Panc1 (cell line): ENCODE measurements at regions of chr3 and their contacts with region 1.

Region 1: GRCh38 chr3:30704931-30705890 is 98.8 kb downstream of the TGFBR2 start:
- DNase-seq: no peak
- ATAC-seq: no peak
- H3K4me3 ChIP-seq: no peak overlapping the region
- H3K27ac ChIP-seq: no peak overlapping the region
- H3K4me1 ChIP-seq: no peaks in the 10 kb centered on the region
- H3K27me3 ChIP-seq: no peaks in the 10 kb centered on the region
- CTCF ChIP-seq: no peak

Region 2: DNA sequence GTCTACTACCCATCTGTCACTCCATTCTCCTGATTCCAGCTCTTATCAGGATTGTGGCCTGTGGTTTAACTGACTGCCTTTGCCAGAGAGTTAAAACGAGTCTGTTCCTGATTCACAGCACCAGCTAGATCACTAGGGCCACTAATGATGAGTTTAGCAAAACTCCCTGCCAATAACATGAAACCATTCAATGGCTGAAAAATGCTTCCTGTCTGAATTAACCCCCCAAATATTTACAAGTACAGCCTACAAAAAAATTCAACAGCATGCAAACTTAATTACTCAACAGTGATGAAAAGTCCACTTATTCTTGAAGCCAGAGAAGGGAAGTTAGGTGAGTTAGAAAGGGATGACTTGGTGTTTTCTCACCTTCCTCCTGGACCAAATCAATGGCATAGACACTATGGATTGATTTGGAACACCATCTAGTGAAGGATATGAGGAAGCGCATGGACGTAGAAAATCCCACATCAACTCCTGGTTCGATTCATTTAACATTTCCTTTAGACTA is 42.6 kb after region 1 on chr3:
- CTCF ChIA-PET with region 1: no interaction called
- POLR2A ChIA-PET with region 1: no interaction called
- in situ Hi-C with region 1: no loop called
- intact Hi-C with region 1: loop called (anchors 5 kb)
- DNase-seq: no peak
- ATAC-seq: peak; percentile 83
- H3K4me3 ChIP-seq: no peak overlapping the region
- H3K27ac ChIP-seq: peak overlapping the region; percentile 68; the same call in 1 of the 2 replicates
- H3K4me1 ChIP-seq: peaks cover 9% of the 10 kb centered on the region
- H3K27me3 ChIP-seq: no peaks in the 10 kb centered on the region
- CTCF ChIP-seq: peak; percentile 67; the same call in 1 of the 2 replicates